Activated CD8-positive, alpha-beta T cell treated with anti-CD3 and anti-CD28 coated beads, Interleukin-2, amount 10 ng/mL, durations not matched to agents 7 days and 5 days (primary cell): ENCODE measurements at regions of chr19 and their contacts with region 1.

Region 1: DNA sequence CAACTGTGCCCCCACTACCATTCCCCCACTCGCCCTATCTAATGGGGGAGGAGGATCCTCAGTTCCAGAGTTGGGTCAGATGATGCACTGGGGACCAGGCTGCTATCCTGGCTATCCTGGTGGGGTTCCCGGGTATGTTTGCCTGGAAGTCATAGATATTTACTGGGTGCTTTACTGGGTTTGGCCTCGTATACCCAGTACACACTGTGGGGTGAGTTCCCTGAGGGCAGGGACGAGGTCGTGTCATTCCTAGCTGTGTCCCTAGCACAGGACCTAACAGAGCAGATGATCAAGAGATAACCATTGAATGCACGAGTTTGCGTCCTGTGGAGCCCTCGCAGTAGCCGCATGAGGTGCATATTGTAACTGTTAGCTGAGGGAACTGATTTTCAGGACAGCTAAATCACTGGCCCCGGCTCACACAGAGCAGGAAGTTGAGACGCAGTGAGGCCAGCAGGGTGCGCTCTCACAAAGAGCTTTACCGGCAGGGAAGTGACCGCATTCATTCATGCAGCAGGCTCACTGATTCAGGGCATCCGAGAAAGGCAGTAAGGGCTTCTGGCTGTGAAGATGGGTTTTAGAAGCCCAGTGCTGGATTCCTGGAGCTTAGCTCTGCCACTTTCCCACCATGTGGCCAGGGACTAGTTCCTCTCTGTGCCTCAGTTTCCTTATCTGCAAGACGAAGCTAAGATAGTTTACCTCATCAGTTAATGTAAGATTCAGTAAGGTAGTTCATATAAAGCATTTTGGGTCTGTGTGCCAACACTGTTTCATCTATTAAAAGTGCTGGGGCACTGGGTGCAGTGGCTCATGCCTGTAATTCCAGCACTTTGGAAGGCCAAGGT is 6.0 kb downstream of the RUVBL2 start:
- DNase-seq: peak; percentile 78
- ATAC-seq: peak; percentile 79
- H3K4me3 Mint-ChIP-seq: no peak overlapping the region
- H3K27ac Mint-ChIP-seq: no peak overlapping the region
- H3K4me1 Mint-ChIP-seq: peaks cover 24% of the 10 kb centered on the region
- H3K27me3 Mint-ChIP-seq: no peaks in the 10 kb centered on the region

Region 2: DNA sequence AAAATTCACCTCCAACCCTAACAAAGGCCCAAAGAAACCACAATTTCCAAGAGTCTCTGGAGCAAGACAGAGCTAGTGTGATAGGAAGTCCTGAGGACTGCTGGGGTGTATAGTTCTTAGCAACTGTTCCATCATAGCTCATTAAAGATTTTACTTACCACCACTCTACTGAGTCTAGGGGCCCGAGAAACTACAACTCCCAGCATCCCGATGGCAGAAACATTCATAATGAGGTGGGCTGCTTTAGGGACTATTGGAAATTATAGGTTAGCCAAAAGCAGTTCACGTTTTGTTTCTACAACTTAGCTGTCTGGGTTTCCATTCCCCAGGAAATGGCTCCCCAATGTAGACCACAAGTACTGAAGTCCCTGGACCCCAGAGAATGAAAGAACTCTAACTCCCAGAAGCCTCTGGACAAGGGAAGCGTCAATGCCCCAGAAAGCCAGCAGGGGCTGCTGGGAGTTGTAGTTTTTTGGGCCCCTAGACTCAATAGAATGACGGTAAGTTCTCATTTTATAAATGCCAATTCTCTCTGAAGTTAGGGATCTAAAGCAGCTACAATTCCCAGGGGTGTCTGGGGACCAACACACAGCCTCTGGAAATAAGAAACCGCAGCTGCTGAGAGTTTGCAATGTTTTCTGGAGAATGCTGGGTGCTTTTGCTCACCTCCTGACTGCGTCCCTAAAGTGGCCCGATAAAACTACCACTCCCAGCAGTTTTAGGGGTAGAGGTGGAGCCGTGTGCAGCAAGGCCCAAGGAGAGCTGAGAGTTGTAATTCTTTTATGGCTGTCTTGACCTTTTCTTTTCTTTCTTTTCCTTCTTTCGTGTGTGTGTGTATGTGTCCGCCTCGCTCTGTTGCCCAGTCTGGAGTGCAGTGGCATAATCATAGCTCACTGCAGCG is 23.5 kb before region 1 on chr19:
- CTCF ChIA-PET with region 1: interaction called, 15 read pairs
- POLR2A ChIA-PET with region 1: no interaction called
- DNase-seq: peak; percentile 64
- ATAC-seq: peak; percentile 54
- H3K4me3 Mint-ChIP-seq: no peak overlapping the region
- H3K27ac Mint-ChIP-seq: no peak overlapping the region
- H3K4me1 Mint-ChIP-seq: peaks cover 15% of the 10 kb centered on the region
- H3K27me3 Mint-ChIP-seq: no peaks in the 10 kb centered on the region

Region 3: DNA sequence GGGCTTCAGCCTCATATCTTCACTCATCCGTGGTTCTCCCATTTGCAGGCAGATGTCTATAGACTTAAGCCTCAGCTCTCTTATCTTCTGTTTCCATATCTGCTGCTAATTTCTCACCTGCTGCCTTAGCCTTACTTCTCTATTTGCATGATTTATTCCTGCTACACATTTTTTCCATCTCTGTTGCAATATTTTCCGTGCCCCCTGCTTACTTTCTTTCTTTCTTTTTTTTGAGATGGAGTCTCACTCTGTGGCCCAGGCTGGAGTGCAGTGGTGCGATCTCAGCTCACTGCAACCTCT is 12.3 kb before region 1 on chr19:
- CTCF ChIA-PET with region 1: interaction called, 13 read pairs
- POLR2A ChIA-PET with region 1: no interaction called
- DNase-seq: no peak
- ATAC-seq: no peak
- H3K4me3 Mint-ChIP-seq: no peak overlapping the region
- H3K27ac Mint-ChIP-seq: peak overlapping the region; percentile 6
- H3K4me1 Mint-ChIP-seq: peaks cover 25% of the 10 kb centered on the region
- H3K27me3 Mint-ChIP-seq: no peaks in the 10 kb centered on the region

Region 4: GRCh38 chr19:49009828-49010227 is 10.1 kb after region 1 on chr19:
- CTCF ChIA-PET with region 1: interaction called, 17 read pairs
- POLR2A ChIA-PET with region 1: no interaction called
- DNase-seq: no peak
- ATAC-seq: no peak
- H3K4me3 Mint-ChIP-seq: no peak overlapping the region
- H3K27ac Mint-ChIP-seq: no peak overlapping the region
- H3K4me1 Mint-ChIP-seq: no peaks in the 10 kb centered on the region
- H3K27me3 Mint-ChIP-seq: no peaks in the 10 kb centered on the region

Region 5: GRCh38 chr19:49017666-49018351 is 18.1 kb after region 1 on chr19:
- CTCF ChIA-PET with region 1: interaction called, 32 read pairs
- POLR2A ChIA-PET with region 1: no interaction called
- DNase-seq: peak; percentile 73
- ATAC-seq: peak; percentile 81
- H3K4me3 Mint-ChIP-seq: peak overlapping the region; percentile 72
- H3K27ac Mint-ChIP-seq: no peak overlapping the region
- H3K4me1 Mint-ChIP-seq: peaks cover 39% of the 10 kb centered on the region
- H3K27me3 Mint-ChIP-seq: peaks cover 11% of the 10 kb centered on the region

Region 6: DNA sequence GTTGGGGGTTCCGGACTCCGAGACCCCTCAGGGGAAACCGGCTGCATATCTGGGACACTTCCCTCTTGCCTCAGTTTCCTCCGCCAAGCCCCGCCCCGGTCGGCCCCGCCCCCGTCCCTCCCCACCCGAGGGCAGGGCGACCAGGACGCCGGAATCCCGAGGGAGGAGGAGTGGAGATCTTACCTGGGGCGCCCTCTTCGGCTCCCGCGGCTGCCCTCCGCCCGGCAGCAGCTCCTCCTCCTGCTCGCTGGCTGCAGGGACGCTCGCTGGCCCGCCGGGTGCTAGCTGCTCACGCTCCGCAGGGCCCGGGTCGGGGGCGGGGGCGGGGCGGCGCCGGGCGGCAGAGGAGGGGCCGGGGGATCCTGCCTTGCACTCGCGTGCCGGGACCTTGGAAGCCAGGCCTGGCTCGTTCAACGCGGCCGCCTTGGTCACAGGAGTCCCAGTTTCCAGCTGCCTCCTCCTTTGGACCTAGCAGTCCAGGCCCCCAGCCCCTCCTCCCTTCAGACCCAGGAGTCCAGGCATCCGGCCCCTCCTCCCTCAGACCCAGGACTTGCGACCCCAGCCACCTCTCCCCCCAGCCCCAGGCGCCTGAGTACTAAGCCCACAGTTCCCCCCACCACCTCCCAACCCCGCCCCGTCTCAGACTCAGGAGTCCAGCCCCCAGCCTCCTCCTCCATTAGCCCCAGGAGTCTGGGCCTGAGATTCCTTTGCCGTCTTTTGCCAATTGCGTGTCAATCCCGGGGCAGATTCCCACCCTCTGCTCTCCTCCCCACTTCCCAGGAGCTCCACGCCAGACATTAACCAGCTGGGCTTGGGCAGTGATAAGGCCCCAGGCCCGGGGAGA is 65.3 kb after region 1 on chr19 and contains the start of gene NTF4:
- CTCF ChIA-PET with region 1: no interaction called
- POLR2A ChIA-PET with region 1: no interaction called
- DNase-seq: no peak
- ATAC-seq: no peak
- H3K4me3 Mint-ChIP-seq: no peak within 1 kb of the TSS
- H3K27ac Mint-ChIP-seq: no peak within 1 kb of the TSS
- H3K4me1 Mint-ChIP-seq: no peaks in the 10 kb centered on the region
- H3K27me3 Mint-ChIP-seq: peaks cover 60% of the 10 kb centered on the region
- total RNA-seq, gene NTF4: not detected

Region 7: DNA sequence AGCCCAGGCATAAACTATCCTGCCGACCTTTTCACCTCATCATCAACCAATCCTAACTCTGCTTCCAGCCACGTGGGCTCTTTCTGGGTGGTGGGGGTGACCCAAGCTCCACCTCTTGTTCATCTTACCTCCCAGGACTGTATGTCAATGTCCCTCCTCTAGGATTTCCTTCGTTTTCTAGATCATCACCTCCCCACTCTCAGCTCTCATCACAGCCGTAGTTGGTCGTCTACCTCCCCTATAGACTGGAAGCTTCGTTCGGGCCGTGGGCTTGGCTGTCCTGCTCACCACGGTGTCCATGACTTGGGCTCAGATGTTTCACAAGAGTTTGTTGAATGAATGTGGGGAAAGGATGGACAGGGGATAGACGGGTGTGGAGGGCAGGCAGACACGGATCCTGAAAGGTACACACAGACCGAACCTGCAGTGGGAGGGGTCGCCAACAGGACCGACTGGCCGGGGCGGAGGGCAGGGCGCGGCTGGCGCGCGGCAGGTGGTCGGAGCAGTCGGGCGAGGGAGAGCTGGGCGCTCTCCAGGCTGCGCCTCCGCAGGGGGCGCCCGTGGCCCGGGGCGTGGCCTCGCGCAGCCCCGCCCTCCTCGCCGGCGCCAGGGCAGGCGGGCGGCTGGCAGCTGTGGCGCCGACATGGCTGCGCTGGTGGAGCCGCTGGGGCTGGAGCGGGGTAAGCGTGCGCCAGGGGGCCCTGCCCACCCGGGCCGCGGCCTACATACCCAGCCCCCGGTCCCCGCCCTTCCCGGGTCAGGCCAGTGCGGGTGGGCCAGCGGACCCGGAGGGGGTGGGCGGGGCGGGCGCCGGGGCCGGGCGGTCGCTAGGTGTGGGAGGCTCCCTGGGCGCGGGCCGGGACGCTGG is 114.3 kb after region 1 on chr19 and contains the start of gene LIN7B:
- CTCF ChIA-PET with region 1: interaction called, 11 read pairs
- POLR2A ChIA-PET with region 1: no interaction called
- DNase-seq: peak; percentile 76
- ATAC-seq: peak; percentile 77
- H3K4me3 Mint-ChIP-seq: peak within 1 kb of the TSS; percentile 80
- H3K27ac Mint-ChIP-seq: peak within 1 kb of the TSS; percentile 75
- H3K4me1 Mint-ChIP-seq: peaks cover 32% of the 10 kb centered on the region
- H3K27me3 Mint-ChIP-seq: no peaks in the 10 kb centered on the region
- total RNA-seq, gene LIN7B: 3.7 to 6.3 TPM

Region 8: GRCh38 chr19:49200238-49200862 is 200.6 kb after region 1 on chr19:
- CTCF ChIA-PET with region 1: interaction called, 10 read pairs
- POLR2A ChIA-PET with region 1: no interaction called
- DNase-seq: peak; percentile 23
- ATAC-seq: peak; percentile 62
- H3K4me3 Mint-ChIP-seq: no peak overlapping the region
- H3K27ac Mint-ChIP-seq: no peak overlapping the region
- H3K4me1 Mint-ChIP-seq: peaks cover 8% of the 10 kb centered on the region
- H3K27me3 Mint-ChIP-seq: no peaks in the 10 kb centered on the region

Region 9: GRCh38 chr19:49243129-49243528 is 243.4 kb after region 1 on chr19:
- CTCF ChIA-PET with region 1: no interaction called
- POLR2A ChIA-PET with region 1: no interaction called
- DNase-seq: no peak
- ATAC-seq: no peak
- H3K4me3 Mint-ChIP-seq: no peak overlapping the region
- H3K27ac Mint-ChIP-seq: no peak overlapping the region
- H3K4me1 Mint-ChIP-seq: no peaks in the 10 kb centered on the region
- H3K27me3 Mint-ChIP-seq: peaks cover 5% of the 10 kb centered on the region